CD4-positive, alpha-beta memory T cell (primary cell): ENCODE measurements at regions of chr21 and their contacts with region 1.

Region 1: DNA sequence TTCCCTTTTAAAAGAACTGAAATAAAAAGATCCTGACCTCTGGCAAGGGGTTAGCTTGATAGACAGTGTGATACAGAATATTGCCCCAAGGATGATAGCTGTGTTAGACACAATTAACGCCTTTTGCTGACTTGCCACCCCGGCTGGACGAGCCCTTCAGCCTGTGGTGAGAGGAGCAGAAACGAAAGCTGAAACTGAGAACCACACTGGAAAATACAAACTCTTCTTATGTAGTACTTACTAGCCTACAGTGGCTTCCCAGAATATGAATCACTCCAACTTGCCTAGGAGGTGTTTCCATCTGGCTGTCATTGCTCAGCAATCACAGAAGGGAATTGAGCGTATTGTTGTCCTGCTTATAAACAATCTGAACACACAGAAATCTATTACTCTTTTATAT is 22.9 kb downstream of the SAMSN1 start:
- DNase-seq: peak in 2 of 5 donors; percentile 24 to 51
- H3K4me3 ChIP-seq: no peak overlapping the region
- H3K4me3 Mint-ChIP-seq: peak overlapping the region; percentile 16 to 92 (median 80)
- H3K27ac ChIP-seq: no peak overlapping the region
- H3K27ac Mint-ChIP-seq: peak overlapping the region; percentile 31 to 92 (median 77)
- H3K4me1 ChIP-seq: peaks cover 76% of the 10 kb centered on the region
- H3K4me1 Mint-ChIP-seq: peaks cover 46 to 70% (median 57%) of the 10 kb centered on the region in 4 donors
- H3K27me3 ChIP-seq: no peaks in the 10 kb centered on the region
- H3K27me3 Mint-ChIP-seq: no peaks in the 10 kb centered on the region

Region 2: GRCh38 chr21:14454016-14455009 is 68.9 kb before region 1 on chr21:
- CTCF ChIA-PET with region 1: no interaction called
- POLR2A ChIA-PET with region 1: no interaction called
- intact Hi-C with region 1: no loop called
- DNase-seq: no peak
- H3K4me3 ChIP-seq: no peak overlapping the region
- H3K4me3 Mint-ChIP-seq: peak overlapping the region in 4 of 8 donors; percentile 3 to 42 (median 27)
- H3K27ac ChIP-seq: no peak overlapping the region
- H3K27ac Mint-ChIP-seq: peak overlapping the region in 4 of 7 donors; percentile 5 to 58 (median 46)
- H3K4me1 ChIP-seq: peaks cover 21% of the 10 kb centered on the region
- H3K4me1 Mint-ChIP-seq: peaks cover 20 to 30% (median 24%) of the 10 kb centered on the region in 4 donors
- H3K27me3 ChIP-seq: no peaks in the 10 kb centered on the region
- H3K27me3 Mint-ChIP-seq: no peaks in the 10 kb centered on the region

Region 3: DNA sequence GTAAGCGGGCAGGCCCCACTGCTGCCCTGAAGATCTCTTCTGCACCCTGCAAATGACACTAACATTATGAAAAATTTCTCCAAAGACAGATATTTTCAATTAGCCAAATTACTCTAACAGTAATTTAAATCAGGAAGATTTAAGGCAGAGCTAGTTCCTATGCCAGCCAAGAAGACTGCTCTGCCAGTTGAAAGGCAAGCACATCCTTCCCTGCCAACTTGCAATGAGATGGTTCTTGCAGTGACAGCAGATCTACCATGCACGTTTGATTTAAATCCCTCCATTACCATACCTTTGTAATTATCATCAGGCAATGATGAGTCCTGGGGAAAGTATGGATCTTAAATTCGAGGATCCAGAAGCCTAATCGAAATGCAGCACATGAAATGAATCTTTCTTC is 53.6 kb before region 1 on chr21:
- CTCF ChIA-PET with region 1: no interaction called
- POLR2A ChIA-PET with region 1: no interaction called
- intact Hi-C with region 1: no loop called
- DNase-seq: no peak
- H3K4me3 ChIP-seq: no peak overlapping the region
- H3K4me3 Mint-ChIP-seq: no peak overlapping the region
- H3K27ac ChIP-seq: no peak overlapping the region
- H3K27ac Mint-ChIP-seq: no peak overlapping the region
- H3K4me1 ChIP-seq: no peaks in the 10 kb centered on the region
- H3K4me1 Mint-ChIP-seq: no peaks in the 10 kb centered on the region
- H3K27me3 ChIP-seq: no peaks in the 10 kb centered on the region
- H3K27me3 Mint-ChIP-seq: no peaks in the 10 kb centered on the region

Region 4: DNA sequence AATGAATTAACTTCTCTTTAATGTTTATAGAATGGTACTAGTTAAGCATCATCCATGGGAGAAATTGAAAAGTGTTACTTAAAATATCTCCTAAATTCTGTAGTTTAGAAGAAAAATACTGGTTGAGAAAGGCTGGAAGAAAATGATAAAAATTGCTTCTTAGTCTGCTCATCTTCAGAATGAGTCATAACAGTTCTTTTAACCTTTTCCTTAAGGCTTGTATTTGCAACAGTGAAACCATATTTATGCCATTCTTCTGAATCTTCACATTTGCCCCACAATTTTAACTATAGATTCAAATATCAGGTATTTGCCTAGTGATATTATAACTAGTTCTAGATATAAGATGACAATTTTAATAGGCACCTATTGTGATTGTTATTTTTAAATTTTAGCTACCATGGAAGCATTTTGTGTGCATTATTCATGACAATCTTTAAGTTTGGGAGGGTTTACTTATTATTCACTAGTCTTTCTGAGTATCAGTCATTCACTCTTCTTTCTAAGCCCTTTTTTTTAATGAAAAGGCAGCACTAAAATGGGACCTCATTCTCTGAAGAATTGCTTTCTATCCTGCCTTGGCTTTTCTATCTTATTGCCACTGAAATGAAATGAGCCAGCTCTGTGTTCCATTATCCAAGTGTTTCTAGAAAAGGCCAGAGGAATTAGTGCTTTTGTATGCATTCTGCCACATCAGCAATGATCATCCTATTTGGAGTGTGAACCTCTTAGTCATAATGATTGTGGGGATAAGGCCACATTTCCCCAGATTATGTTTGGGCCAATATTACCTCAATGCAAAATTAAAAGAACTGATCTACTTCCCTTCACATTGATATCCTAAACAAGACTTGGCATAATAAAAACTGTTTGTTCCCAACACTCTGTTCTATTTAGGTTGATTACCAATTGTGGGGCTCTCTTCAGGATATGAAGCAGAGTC is 35.5 kb before region 1 on chr21:
- CTCF ChIA-PET with region 1: no interaction called
- POLR2A ChIA-PET with region 1: interaction called, 4 read pairs
- intact Hi-C with region 1: loop called (anchors 5 kb)
- DNase-seq: no peak
- H3K4me3 ChIP-seq: no peak overlapping the region
- H3K4me3 Mint-ChIP-seq: no peak overlapping the region
- H3K27ac ChIP-seq: no peak overlapping the region
- H3K27ac Mint-ChIP-seq: peak overlapping the region; percentile 5 to 66 (median 49)
- H3K4me1 ChIP-seq: peaks cover 26% of the 10 kb centered on the region
- H3K4me1 Mint-ChIP-seq: peaks cover 23 to 50% (median 37%) of the 10 kb centered on the region in 4 donors
- H3K27me3 ChIP-seq: no peaks in the 10 kb centered on the region
- H3K27me3 Mint-ChIP-seq: no peaks in the 10 kb centered on the region

Region 5: GRCh38 chr21:15445327-15445726 is 922.1 kb after region 1 on chr21:
- CTCF ChIA-PET with region 1: no interaction called
- POLR2A ChIA-PET with region 1: no interaction called
- intact Hi-C with region 1: no loop called
- DNase-seq: no peak
- H3K4me3 ChIP-seq: no peak overlapping the region
- H3K4me3 Mint-ChIP-seq: no peak overlapping the region
- H3K27ac ChIP-seq: no peak overlapping the region
- H3K27ac Mint-ChIP-seq: peak overlapping the region in 1 of 7 donors; percentile 9
- H3K4me1 ChIP-seq: no peaks in the 10 kb centered on the region
- H3K4me1 Mint-ChIP-seq: no peaks in the 10 kb centered on the region
- H3K27me3 ChIP-seq: no peaks in the 10 kb centered on the region
- H3K27me3 Mint-ChIP-seq: no peaks in the 10 kb centered on the region